Activated T-helper 1 cell treated with anti-CD3 and anti-CD28 coated beads, Interleukin-12 subunit alpha, Interleukin-12 subunit beta, Interleukin-2, Interleukin-4 antibody, amounts not matched to agents 30 ng/mL and 10 ng/mL and 1 ng/mL, durations not matched to agents 14 hours and 24 hours and 36 hours (primary cell): ENCODE measurements at regions of chr9 and their contacts with region 1.

Region 1: GRCh38 chr9:21317956-21318923 is 13.1 kb upstream of the IFNA5 start:
- DNase-seq: no peak
- H3K4me3 Mint-ChIP-seq: no peak overlapping the region
- H3K27ac Mint-ChIP-seq: no peak overlapping the region
- H3K4me1 Mint-ChIP-seq: peaks cover 4% of the 10 kb centered on the region
- H3K27me3 Mint-ChIP-seq: peaks cover 22% of the 10 kb centered on the region

Region 2: GRCh38 chr9:21395778-21396717 is 77.8 kb after region 1 on chr9:
- intact Hi-C with region 1: loop called (anchors 1 kb)
- DNase-seq: peak; percentile 28
- H3K4me3 Mint-ChIP-seq: peak overlapping the region; percentile 78
- H3K27ac Mint-ChIP-seq: no peak overlapping the region
- H3K4me1 Mint-ChIP-seq: peaks cover 10% of the 10 kb centered on the region
- H3K27me3 Mint-ChIP-seq: peaks cover 64% of the 10 kb centered on the region

Region 3: GRCh38 chr9:21455320-21455719 is 137.1 kb after region 1 on chr9:
- intact Hi-C with region 1: loop called (anchors 1 kb)
- DNase-seq: no peak
- H3K4me3 Mint-ChIP-seq: no peak overlapping the region
- H3K27ac Mint-ChIP-seq: no peak overlapping the region
- H3K4me1 Mint-ChIP-seq: no peaks in the 10 kb centered on the region
- H3K27me3 Mint-ChIP-seq: peaks cover 28% of the 10 kb centered on the region